GM12878 (cell line): ENCODE measurements at regions of chr2 and their contacts with region 1.

Region 1: GRCh38 chr2:236180831-236181453 is 12.8 kb upstream of the GBX2 start:
- DNase-seq: no peak
- ATAC-seq: peak; percentile 54; the same call in 2 of the 3 replicates
- H3K4me3 ChIP-seq: no peak overlapping the region
- H3K27ac ChIP-seq: no peak overlapping the region
- H3K4me1 ChIP-seq: no peaks in the 10 kb centered on the region
- H3K27me3 ChIP-seq: no peaks in the 10 kb centered on the region; a peak in 1 of 4 replicates
- CTCF ChIP-seq: peak; percentile 54 to 61 (median 57)
- EP300 ChIP-seq: no peak
- POLR2A ChIP-seq: no peak
- RAD21 ChIP-seq: peak; percentile 65

Region 2: DNA sequence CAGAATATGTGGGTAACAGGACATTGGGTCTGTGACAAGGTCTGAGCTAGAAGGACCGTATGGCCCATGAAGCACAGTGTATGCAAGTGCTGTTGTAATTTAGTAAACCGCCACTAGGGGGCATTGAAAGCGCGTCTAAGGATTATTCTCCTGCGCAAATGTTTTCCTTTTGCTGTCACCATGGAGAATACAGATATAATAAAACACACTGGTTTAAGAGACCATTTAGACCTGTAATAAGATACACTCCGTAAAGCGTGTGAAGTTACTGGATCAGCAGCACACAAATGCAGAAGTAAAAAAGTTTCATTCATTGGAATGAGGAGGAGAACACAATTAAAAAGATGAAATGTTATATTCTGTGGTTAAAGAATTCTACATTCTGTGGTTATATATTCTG is 414.7 kb before region 1 on chr2:
- CTCF ChIA-PET with region 1: interaction called, 27 read pairs
- POLR2A ChIA-PET with region 1: no interaction called
- RAD21 ChIA-PET with region 1: interaction called, 9 read pairs
- SMC1A ChIA-PET with region 1: interaction called, 6 read pairs
- in situ Hi-C with region 1: loop called (anchors 5 kb)
- intact Hi-C with region 1: loop called (anchors 2 kb)
- DNase-seq: no peak
- ATAC-seq: peak; percentile 94
- H3K4me3 ChIP-seq: no peak overlapping the region
- H3K27ac ChIP-seq: no peak overlapping the region
- H3K4me1 ChIP-seq: no peaks in the 10 kb centered on the region
- H3K27me3 ChIP-seq: no peaks in the 10 kb centered on the region
- CTCF ChIP-seq: peak; percentile 68 to 82 (median 80)
- EP300 ChIP-seq: no peak
- POLR2A ChIP-seq: no peak
- RAD21 ChIP-seq: peak; percentile 72

Region 3: GRCh38 chr2:235773188-235773928 is 407.6 kb before region 1 on chr2:
- CTCF ChIA-PET with region 1: interaction called, 5 read pairs
- POLR2A ChIA-PET with region 1: no interaction called
- RAD21 ChIA-PET with region 1: no interaction called
- SMC1A ChIA-PET with region 1: no interaction called
- in situ Hi-C with region 1: loop called (anchors 5 kb)
- intact Hi-C with region 1: no loop called
- DNase-seq: no peak
- ATAC-seq: no peak
- H3K4me3 ChIP-seq: no peak overlapping the region
- H3K27ac ChIP-seq: no peak overlapping the region
- H3K4me1 ChIP-seq: no peaks in the 10 kb centered on the region
- H3K27me3 ChIP-seq: no peaks in the 10 kb centered on the region; a peak in 1 of 4 replicates
- CTCF ChIP-seq: no peak
- EP300 ChIP-seq: no peak
- POLR2A ChIP-seq: no peak
- RAD21 ChIP-seq: no peak